H1 (cell line): ENCODE measurements at regions of chr5 and their contacts with region 1.

Region 1: GRCh38 chr5:139341650-139342422 is at the start of gene PAIP2:
- DNase-seq: peak; percentile 92 to 97
- H3K4me3 ChIP-seq: peak within 1 kb of the TSS; percentile 82 to 94 (median 88)
- H3K27ac ChIP-seq: peak within 1 kb of the TSS; percentile 99
- H3K4me1 ChIP-seq: peaks cover 0 to 7% (median under 1%) of the 10 kb centered on the region in 4 experiments; a peak in 4 of 7 replicates
- H3K27me3 ChIP-seq: no peaks in the 10 kb centered on the region
- CTCF ChIP-seq: peak; percentile 65 to 89 (median 77)
- EP300 ChIP-seq: peak in 1 of 2 experiments; percentile 56; a peak in 1 of 3 replicates
- POLR2A ChIP-seq: peak; percentile 95 to 96
- RAD21 ChIP-seq: peak; percentile 36 to 49
- total RNA-seq, gene PAIP2: 157 and 162 TPM in 2 replicates

Region 2: GRCh38 chr5:139120521-139120920 is 221.3 kb before region 1 on chr5:
- CTCF ChIA-PET with region 1: no interaction called
- POLR2A ChIA-PET with region 1: no interaction called
- DNase-seq: no peak
- H3K4me3 ChIP-seq: no peak overlapping the region
- H3K27ac ChIP-seq: no peak overlapping the region
- H3K4me1 ChIP-seq: no peaks in the 10 kb centered on the region
- H3K27me3 ChIP-seq: no peaks in the 10 kb centered on the region
- CTCF ChIP-seq: no peak
- EP300 ChIP-seq: no peak
- POLR2A ChIP-seq: no peak
- RAD21 ChIP-seq: no peak

Region 3: DNA sequence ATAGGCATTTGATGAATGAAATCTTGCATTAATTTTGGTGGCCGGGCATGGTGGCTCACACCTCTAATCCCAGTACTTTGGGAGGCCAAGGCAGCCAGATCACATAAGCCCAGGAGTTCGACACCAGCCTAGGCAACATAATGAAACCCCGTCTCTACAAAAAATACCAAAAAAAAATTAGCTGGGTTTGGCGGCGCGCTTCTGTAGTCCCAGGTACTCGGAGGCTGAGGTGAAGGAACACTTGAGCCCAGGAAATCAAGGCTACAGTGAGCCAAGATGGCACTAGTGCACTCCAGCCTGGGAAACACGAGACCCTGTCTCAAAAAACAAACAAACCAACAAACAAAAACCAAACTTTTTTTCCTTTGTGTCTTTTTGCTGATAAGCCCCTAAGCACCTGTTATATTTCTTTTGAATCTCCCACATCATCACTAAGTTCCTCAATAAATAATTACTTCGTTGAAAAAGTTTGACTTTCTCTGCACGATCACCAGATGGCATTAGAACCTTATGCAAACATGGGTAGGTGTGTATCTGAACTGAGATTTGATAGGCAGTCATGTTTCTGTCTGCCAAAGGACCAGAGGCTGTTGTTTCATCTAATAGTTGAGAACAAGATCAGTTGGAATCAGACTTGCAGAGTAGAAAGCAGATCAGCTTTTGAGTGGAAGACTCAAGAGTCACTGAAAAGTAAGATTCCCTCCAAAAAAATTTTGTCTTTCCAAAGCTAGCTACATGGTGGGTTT is 53.8 kb before region 1 on chr5:
- CTCF ChIA-PET with region 1: interaction called, 7 read pairs
- POLR2A ChIA-PET with region 1: interaction called, 163 read pairs
- DNase-seq: no peak
- H3K4me3 ChIP-seq: no peak overlapping the region
- H3K27ac ChIP-seq: no peak overlapping the region
- H3K4me1 ChIP-seq: no peaks in the 10 kb centered on the region
- H3K27me3 ChIP-seq: no peaks in the 10 kb centered on the region
- CTCF ChIP-seq: no peak
- EP300 ChIP-seq: no peak
- POLR2A ChIP-seq: peak in 1 of 2 experiments; percentile 24; a peak in 1 of 3 replicates
- RAD21 ChIP-seq: peak; percentile 22 to 38; a peak in 2 of 4 replicates

Region 4: DNA sequence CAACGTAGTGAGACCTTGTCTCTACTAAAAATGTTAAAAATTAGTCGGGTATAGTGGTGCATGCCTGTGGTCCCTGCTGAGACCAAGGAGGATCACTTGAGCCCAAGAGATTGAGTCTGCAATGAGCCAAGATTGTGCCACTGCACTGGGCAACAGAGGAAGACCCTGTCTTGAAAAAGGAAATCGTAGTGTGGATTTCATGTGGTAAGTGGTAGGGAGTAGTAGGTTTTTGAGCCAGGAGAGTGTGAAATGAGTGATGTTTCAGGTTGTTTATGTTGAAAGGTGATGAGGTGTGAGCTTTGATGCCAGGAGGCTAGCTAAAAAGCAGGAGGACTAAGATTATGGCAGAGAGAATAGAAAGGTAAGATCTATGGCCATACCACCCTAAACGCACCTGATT is 42.4 kb before region 1 on chr5:
- CTCF ChIA-PET with region 1: interaction called, 4 read pairs
- POLR2A ChIA-PET with region 1: interaction called, 163 read pairs
- DNase-seq: no peak
- H3K4me3 ChIP-seq: no peak overlapping the region
- H3K27ac ChIP-seq: no peak overlapping the region
- H3K4me1 ChIP-seq: peaks cover 0 to 45% (median 15%) of the 10 kb centered on the region in 4 experiments; a peak in 5 of 7 replicates
- H3K27me3 ChIP-seq: no peaks in the 10 kb centered on the region
- CTCF ChIP-seq: no peak
- EP300 ChIP-seq: no peak
- POLR2A ChIP-seq: 0 out of 3 replicates have a peak, but pooled peaks of 1 of the 2 experiments have one; percentile 22
- RAD21 ChIP-seq: no peak

Region 5: DNA sequence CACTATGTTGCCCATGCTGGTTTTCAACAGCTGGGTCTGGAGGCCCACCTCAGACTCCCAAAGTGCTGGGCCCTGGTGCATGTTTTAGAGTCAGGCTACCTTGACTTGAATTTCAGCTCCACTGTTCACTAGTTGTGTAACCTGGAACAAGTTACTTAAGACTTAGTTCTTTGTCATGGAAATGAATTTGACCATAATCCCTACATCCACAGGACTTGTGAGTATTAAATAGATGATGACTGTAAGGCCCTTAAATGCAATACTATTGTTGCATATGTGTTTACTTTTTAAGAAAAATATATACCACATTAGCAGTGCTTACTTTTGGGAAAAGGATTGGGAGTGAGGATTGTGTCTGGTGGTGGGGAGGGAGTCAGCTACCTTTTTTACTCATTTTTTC is 16.2 kb after region 1 on chr5:
- CTCF ChIA-PET with region 1: interaction called, 12 read pairs
- POLR2A ChIA-PET with region 1: interaction called, 49 read pairs
- DNase-seq: no peak
- H3K4me3 ChIP-seq: no peak overlapping the region
- H3K27ac ChIP-seq: no peak overlapping the region
- H3K4me1 ChIP-seq: no peaks in the 10 kb centered on the region
- H3K27me3 ChIP-seq: no peaks in the 10 kb centered on the region
- CTCF ChIP-seq: no peak
- EP300 ChIP-seq: no peak
- POLR2A ChIP-seq: no peak
- RAD21 ChIP-seq: no peak

Region 6: DNA sequence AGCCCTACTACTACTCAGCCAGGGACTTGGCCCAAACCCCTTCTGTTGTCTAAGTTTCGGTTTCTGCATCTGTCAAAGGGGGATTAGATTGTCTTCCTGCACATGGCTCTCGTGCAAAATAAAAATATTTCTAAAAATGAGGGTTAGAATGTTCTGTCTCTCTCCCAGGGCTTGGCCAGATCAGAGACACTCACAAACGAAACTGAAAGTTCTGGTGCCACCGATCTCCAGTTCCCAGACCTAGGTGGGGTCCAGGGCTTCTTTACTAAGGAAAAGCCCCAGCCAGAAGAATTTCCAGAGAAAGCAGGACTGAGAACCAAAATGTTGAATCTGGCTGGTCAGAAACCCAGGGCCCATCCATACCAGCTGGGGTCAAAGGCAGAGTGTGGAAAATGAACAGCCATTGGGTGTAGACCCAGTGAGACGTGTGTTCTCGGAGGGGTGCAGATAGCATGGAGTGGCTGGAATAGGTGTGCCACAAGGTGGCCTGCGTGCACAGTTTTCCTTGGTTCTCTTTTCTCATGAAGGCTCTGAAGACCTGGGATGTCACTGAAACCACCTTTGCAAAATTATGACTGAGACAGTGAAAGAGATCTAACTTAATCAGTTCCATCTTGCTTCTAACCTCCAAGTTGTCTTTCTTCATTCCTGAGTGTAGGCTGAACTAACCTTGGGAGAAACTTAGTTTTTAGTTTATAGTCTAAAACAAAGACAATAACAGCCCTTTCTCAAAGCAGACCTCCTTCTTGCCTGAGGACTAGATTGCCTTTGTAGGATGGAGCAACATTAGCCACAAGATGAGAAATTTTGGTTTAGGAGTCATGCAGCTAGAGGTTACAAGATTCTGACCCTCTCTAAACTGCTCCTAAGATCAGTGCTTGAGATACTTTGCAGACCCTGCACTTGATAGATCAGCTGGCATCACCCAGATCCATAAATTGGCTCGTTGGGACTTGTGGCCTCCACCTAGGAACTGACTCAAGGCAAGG is 43.5 kb after region 1 on chr5:
- CTCF ChIA-PET with region 1: interaction called, 7 read pairs
- POLR2A ChIA-PET with region 1: interaction called, 11 read pairs
- DNase-seq: no peak
- H3K4me3 ChIP-seq: no peak overlapping the region
- H3K27ac ChIP-seq: no peak overlapping the region
- H3K4me1 ChIP-seq: peaks cover 3 to 12% (median 9%) of the 10 kb centered on the region in 4 experiments
- H3K27me3 ChIP-seq: no peaks in the 10 kb centered on the region
- CTCF ChIP-seq: peak in 1 of 3 experiments; percentile 2; a peak in 1 of 4 replicates
- EP300 ChIP-seq: no peak
- POLR2A ChIP-seq: no peak
- RAD21 ChIP-seq: 0 out of 4 replicates have a peak, but pooled peaks of 1 of the 2 experiments have one; percentile 8

Region 7: DNA sequence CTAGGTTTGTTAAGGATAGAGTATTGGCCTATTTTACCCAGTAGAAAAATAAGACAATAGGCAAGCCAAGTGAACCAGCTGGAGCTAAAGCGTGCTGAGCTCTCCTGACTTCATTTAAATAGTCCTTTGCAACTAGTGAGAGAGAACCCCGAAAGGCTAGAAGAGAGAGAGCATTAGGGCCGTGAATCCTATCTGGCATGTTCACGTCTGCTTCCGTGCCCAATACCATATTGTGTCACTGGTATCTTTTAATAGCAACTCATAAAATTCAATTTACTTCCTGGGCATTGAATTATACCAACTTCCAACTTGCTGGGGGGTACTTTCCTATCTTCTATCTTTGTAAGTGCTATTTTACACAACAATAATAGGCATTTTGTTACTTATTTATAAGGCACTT is 83.7 kb after region 1 on chr5:
- CTCF ChIA-PET with region 1: no interaction called
- POLR2A ChIA-PET with region 1: no interaction called
- DNase-seq: no peak
- H3K4me3 ChIP-seq: no peak overlapping the region
- H3K27ac ChIP-seq: no peak overlapping the region
- H3K4me1 ChIP-seq: no peaks in the 10 kb centered on the region
- H3K27me3 ChIP-seq: no peaks in the 10 kb centered on the region
- CTCF ChIP-seq: no peak
- EP300 ChIP-seq: no peak
- POLR2A ChIP-seq: no peak
- RAD21 ChIP-seq: no peak